Psoas muscle (tissue), 8 donors: ENCODE measurements at regions of chr18 and their contacts with region 1.

Region 1: DNA sequence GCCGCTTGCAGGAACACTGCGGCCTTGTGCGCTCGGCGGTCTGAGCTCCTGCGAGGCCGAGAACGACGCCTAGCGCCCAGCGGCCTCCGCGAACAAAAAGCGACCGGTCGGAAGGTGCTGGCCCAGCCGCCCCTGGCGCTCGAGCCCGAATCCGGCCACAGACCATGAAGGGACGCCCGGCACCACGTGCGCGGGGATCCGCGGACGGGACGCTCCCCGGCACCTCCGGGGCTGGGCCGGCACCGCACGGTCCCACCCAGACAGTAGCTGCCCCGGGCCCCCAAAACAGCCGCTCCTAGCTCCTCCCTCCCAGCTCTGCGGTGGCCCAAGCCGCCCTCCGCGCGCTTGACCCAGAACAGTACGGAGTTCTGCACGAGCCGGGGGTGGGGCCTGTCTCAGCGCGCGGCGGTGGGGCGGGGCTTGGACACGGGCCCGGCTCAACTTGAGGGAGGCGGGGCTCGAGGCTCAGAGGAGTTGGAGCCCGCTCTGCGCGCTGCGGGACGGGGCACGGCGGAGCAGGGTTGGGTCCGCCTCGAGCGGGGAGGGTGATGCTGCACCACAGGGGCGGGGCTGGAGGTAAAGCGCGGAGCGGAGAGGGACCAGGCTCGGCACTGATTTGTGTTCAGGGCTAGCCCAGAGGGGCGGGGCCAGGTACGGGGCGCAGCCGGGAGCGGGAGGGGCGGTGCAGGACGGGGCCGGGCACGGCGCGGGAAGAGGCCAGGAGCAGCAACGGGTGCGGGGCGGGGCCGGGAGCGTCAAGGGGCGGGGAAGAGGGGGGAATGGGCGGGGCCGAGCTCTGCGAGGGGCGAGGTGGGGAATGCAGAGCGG is 538 bp upstream of the IMPA2 start:
- DNase-seq: peak; percentile 99 to 100
- ATAC-seq: peak; percentile 84 to 92 (median 85)
- H3K4me3 ChIP-seq: peak overlapping the region; percentile 95
- H3K27ac ChIP-seq: peak overlapping the region; percentile 96
- H3K4me1 ChIP-seq: peaks cover 18% of the 10 kb centered on the region
- H3K27me3 ChIP-seq: no peaks in the 10 kb centered on the region
- CTCF ChIP-seq: no peak

Region 2: DNA sequence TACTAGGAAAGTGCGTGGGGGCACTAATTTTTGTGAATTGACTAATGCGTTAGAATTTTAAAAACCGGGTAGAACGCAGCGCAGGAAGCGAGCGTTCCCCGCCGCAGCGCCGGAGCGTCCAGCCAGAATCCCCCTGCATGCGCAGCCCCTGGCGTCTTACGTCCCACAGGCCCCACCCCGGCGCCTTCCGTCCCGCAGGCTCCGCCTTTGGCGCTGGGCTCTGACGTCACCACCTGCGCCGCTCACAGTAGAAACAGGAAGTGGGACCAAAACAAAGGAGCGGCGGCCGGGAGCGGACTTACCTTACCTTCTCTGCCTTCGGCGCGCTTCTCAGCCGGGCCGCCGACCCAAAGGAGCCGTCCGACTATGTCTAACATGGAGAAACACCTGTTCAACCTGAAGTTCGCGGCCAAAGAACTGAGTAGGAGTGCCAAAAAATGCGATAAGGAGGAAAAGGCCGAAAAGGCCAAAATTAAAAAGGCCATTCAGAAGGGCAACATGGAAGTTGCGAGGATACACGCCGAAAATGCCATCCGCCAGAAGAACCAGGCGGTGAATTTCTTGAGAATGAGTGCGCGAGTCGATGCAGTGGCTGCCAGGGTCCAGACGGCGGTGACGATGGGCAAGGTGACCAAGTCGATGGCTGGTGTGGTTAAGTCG is 129.5 kb before region 1 on chr18 and contains the start of gene CHMP1B:
- intact Hi-C with region 1: loop called (anchors 2 to 10 kb)
- DNase-seq: peak; percentile 99
- ATAC-seq: peak; percentile 84 to 89 (median 85)
- H3K4me3 ChIP-seq: peak within 1 kb of the TSS; percentile 91
- H3K27ac ChIP-seq: peak within 1 kb of the TSS; percentile 98
- H3K4me1 ChIP-seq: peaks cover 12% of the 10 kb centered on the region
- H3K27me3 ChIP-seq: no peaks in the 10 kb centered on the region
- CTCF ChIP-seq: no peak
- total RNA-seq, gene CHMP1B: 77.9 to 460 (median 292) TPM

Region 3: DNA sequence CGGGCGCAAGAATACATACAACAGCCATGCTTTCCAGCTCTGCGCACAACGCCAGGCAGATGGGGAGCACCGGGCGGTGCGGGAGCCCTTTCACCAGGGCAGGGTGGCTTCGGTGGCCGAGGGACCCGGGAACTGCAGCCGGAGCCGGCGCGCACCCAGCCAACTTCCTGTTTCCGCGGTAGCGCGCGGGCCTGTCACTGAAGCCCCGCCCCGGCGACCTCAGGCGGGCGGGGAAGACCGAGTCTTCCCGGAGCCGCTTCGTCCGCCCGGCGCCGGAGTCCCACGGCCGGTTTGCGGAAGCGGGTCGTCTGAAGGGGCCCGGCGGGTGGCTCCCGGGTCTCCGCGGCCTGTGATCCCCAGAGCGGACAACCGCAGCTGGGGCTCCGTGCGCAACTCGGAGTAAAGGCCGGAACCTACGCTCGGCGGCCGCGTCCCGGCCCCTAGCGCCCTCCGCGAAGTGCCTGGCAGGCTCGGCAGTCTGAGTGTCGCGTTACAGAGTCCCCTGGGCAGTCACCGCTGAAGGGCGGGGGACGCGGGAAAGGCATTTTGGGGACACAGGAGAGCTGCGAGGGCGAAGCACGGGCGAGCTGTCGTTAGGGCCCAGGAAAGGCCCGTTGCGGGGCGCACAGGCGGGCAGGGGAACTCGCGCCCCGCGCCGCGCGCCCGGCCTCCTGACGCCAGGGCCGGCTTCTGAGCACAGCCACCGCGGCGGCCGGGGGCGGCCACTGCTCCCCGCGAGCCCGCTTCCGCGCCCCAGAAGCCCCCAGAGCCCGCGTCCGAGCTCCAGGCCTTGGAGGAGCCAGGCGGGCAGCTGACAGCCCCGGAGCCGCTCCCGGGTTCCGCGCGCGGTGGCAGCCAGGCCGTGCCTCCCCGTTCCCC is 72.3 kb before region 1 on chr18 and contains the start of gene MPPE1:
- intact Hi-C with region 1: loop called in 1 of 2 experiments (anchors 2 kb)
- DNase-seq: peak; percentile 92 to 95
- ATAC-seq: peak; percentile 94 to 96 (median 94)
- H3K4me3 ChIP-seq: peak within 1 kb of the TSS; percentile 88
- H3K27ac ChIP-seq: peak within 1 kb of the TSS; percentile 99
- H3K4me1 ChIP-seq: peaks cover 18% of the 10 kb centered on the region
- H3K27me3 ChIP-seq: no peaks in the 10 kb centered on the region
- CTCF ChIP-seq: no peak
- total RNA-seq, gene MPPE1: 22.5 to 33.4 (median 27.6) TPM

Region 4: DNA sequence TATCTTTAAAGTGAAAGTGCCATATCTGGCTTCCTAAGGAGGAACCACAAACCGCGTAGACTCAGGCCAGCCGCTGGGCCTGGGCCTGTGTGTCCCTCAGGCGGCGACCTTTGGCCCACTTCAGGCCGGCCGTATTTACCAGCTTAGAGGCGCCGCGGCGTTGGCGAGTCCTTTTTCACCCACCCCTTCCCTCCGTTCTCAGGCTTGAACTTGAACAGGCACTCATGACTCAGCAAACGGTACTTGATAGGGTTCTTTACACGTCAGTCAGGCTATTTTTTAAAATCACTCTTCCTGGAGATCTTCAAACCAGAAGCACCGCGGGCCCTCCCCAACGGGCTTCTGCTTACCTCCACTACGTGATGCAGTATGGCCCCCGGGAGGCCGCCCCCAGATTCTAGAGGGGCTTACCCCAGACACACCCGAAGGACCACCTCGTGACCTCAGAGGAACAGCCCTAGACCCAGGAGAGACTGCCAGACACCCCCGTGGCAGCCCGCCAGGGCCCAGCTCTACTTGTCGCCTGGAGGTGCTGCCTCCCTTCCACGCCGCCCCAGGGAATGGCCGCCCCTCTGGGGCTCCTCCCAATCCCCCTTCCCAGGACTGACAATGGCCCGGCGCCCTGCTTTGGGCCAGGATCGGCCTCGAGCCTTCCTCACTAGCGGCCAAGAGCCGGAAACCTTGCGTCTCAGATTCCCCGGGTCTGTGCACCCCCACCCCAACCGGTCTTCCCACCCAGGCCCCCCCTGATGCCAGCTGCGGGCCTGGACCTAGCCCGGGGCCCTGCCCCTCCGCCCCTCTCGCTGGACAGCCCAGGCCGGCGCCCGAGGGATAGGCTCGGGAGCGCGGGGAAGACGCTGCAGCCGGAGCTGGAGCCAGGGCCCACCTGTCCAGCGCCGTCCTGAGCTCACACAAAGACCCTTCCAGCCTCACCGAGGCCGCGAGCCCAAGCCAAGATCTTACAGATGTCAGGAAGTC is 33.3 kb before region 1 on chr18:
- intact Hi-C with region 1: loop called (anchors 1 to 2 kb)
- DNase-seq: peak; percentile 95 to 97
- ATAC-seq: peak; percentile 90 to 92 (median 92)
- H3K4me3 ChIP-seq: peak overlapping the region; percentile 68
- H3K27ac ChIP-seq: peak overlapping the region; percentile 94
- H3K4me1 ChIP-seq: peaks cover 17% of the 10 kb centered on the region
- H3K27me3 ChIP-seq: no peaks in the 10 kb centered on the region
- CTCF ChIP-seq: no peak

Region 5: GRCh38 chr18:12015416-12016062 is 34.8 kb after region 1 on chr18:
- intact Hi-C with region 1: no loop called
- DNase-seq: peak; percentile 69 to 87
- ATAC-seq: peak; percentile 76 to 89 (median 86)
- H3K4me3 ChIP-seq: no peak overlapping the region
- H3K27ac ChIP-seq: peak overlapping the region; percentile 67
- H3K4me1 ChIP-seq: peaks cover 42% of the 10 kb centered on the region
- H3K27me3 ChIP-seq: no peaks in the 10 kb centered on the region
- CTCF ChIP-seq: no peak